Activated CD4-positive, alpha-beta T cell treated with anti-CD3 and anti-CD28 coated beads, Interleukin-2, amount 10 ng/mL, durations not matched to agents 24 days and 14 days (primary cell): ENCODE measurements at regions of chr2 and their contacts with region 1.

Region 1: GRCh38 chr2:202033321-202034248 is at the start of gene FZD7:
- DNase-seq: peak; percentile 96
- H3K4me3 Mint-ChIP-seq: peak within 1 kb of the TSS; percentile 85
- H3K27ac Mint-ChIP-seq: peak within 1 kb of the TSS; percentile 62
- H3K4me1 Mint-ChIP-seq: peaks cover 12% of the 10 kb centered on the region
- H3K27me3 Mint-ChIP-seq: peaks cover 42% of the 10 kb centered on the region
- total RNA-seq, gene FZD7: 1.3 TPM in 2 replicates

Region 2: DNA sequence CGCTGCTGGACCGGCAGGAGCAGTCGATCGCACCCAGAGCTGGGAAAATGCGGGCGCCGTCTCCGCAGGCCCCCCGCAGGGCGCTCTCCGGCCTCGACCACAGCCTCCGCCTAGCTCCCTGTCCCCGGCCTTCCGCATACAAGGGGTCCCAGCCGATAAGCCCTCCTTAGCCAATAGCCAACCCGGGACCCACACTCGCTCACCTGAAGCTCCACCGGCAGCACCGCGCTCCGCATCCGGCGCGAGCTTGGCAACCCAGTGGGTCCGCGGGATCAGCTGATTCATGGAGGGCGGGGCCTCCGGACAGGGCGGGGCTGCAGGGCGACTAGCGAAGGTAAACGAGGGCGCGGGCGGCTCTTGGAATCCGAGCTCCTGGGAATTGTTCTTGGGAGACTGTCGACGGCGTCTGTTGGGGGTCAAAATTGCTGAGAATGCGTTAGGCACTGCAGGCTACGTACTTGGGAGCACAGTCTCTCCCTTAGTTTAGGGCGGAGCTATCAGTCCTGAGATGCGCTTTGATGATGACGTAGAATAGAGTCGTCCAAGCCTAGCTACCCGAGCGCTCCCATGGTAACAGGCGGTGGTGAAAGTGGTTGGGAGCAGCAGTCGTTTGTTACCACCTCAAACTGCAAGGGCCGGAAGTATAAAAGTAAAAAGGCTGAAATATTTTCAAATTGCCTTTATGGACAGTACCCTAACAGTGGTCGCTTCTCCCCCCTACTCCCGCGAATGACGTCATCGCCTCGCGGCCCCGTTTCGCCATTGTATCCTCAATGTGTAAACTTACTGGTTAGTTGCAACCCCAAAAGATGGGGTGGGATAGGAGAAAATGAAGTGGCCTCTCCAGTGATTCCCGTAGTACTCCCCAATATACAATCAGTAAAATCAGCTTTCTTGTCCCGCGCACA is 252.7 kb before region 1 on chr2 and contains the start of gene ALS2:
- intact Hi-C with region 1: loop called (anchors 5 kb)
- DNase-seq: peak; percentile 99
- H3K4me3 Mint-ChIP-seq: peak within 1 kb of the TSS; percentile 95
- H3K27ac Mint-ChIP-seq: peak within 1 kb of the TSS; percentile 92
- H3K4me1 Mint-ChIP-seq: peaks cover 22% of the 10 kb centered on the region
- H3K27me3 Mint-ChIP-seq: peaks cover 20% of the 10 kb centered on the region
- total RNA-seq, gene ALS2: 10.7 and 11.3 TPM in 2 replicates

Region 3: DNA sequence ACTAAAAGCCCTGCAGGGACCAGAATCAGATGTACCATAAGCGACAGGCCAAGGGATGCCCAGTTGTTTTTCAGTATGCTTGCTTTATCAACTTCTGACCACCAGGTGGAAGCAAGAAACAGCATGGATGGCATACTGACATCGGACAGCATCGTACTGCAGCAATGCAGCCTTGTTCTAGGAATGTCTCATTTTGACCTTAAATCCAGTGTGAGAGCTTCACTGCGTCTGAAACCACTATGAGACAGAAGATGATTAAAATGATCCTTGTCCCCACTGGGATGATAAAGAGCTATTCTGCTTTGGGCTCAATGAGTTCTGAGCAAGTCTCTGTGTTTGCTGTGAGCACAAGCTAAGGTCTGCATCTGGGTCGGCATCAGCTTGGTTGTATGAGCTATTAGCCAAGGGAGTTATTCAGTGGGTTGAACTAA is 172.9 kb before region 1 on chr2:
- intact Hi-C with region 1: loop called (anchors 10 kb)
- DNase-seq: peak; percentile 83
- H3K4me3 Mint-ChIP-seq: no peak overlapping the region
- H3K27ac Mint-ChIP-seq: no peak overlapping the region
- H3K4me1 Mint-ChIP-seq: peaks cover 12% of the 10 kb centered on the region
- H3K27me3 Mint-ChIP-seq: peaks cover 38% of the 10 kb centered on the region

Region 4: DNA sequence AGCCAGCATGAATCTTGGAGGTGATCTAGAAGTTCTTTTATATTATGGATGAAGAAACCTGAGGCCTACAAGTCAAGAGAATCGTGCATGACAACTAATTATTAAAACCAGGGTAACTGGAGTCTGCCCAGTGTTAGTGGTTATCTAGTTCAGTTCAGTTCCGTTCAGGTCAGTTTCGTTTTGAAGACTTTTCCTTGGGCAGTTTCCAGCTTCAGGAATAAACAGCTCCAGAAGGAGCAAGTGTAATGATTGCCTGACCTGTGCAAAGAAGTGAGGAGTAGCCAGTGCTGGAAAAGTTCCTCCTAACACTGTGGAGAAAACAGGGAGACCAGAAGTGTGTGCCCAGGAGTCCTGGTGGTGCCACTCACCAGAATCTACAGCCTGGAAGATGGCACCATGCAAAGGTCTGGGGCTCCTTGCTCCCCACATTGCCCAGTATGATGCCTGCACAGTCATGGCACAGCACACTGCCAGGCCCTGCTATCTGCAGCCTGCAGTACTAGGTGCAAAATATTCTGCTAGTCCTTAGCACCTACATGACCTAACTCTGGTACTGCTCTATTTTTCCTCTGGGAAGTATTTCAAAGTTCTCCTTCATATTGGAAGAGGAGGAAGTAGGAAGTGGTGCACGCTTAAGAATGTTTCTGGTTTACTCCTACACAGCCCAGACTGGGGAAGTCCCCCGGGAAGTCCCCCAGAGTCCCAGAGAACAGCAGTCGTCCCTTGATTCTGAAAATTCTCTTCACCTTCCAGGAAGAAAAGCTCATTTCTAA is 139.0 kb after region 1 on chr2:
- intact Hi-C with region 1: loop called (anchors 2 kb)
- DNase-seq: peak; percentile 72
- H3K4me3 Mint-ChIP-seq: peak overlapping the region; percentile 68
- H3K27ac Mint-ChIP-seq: peak overlapping the region; percentile 86
- H3K4me1 Mint-ChIP-seq: peaks cover 22% of the 10 kb centered on the region
- H3K27me3 Mint-ChIP-seq: peaks cover 4% of the 10 kb centered on the region

Region 5: DNA sequence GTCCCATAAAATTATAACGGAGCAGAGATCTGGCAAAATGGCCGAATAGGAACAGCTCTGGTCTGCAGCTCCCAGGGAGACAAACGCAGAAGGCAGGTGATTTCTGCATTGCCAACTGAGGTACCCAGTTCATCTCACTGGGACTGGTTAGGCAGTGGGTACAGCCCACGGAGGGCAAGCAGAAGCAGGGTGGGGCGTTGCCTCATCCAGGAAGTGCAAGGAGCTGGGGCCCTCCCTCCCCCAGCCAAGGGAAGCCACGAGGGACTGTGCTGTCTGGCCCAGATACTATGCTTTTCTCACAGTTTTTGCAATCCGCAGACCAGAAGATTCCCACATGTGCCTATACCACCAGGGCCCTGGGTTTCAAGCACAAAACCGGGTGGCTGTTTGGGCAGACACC is 815.2 kb after region 1 on chr2:
- intact Hi-C with region 1: no loop called
- DNase-seq: no peak
- H3K4me3 Mint-ChIP-seq: no peak overlapping the region
- H3K27ac Mint-ChIP-seq: no peak overlapping the region
- H3K4me1 Mint-ChIP-seq: no peaks in the 10 kb centered on the region
- H3K27me3 Mint-ChIP-seq: no peaks in the 10 kb centered on the region